ENCODE measurements at regions of chr17 and their contacts with region 1.

Region 1: GRCh38 chr17:7561028-7561575 is 617 bp upstream of the SENP3 start:
- H3K4me3 ChIP-seq: peak overlapping the region; percentile 85
- H3K27ac ChIP-seq: peak overlapping the region; percentile 93
- H3K4me1 ChIP-seq: peaks cover 11% of the 10 kb centered on the region
- CTCF ChIP-seq: peak; percentile 90

Region 2: DNA sequence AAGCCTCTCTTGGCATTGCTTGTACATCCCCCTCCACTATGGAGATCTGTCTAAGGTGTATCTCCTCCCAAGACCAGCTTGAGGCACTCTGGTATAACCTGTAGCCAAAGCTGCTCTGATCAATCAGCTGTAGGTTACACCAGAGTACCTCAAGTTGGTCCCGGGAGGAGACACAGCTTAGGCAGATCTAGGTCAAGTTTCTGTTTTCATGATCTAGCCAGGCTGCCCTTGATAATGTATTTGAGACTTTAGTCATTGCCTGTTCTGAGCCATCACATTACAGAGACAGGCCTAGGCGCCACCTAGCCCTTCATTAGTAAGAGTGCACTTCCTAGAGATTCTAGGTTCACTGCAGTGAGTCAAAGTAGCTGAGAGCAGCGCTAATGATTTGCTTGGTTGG is 413.3 kb before region 1 on chr17:
- CTCF ChIA-PET with region 1: no interaction called
- POLR2A ChIA-PET with region 1: no interaction called
- H3K4me3 ChIP-seq: no peak overlapping the region
- H3K27ac ChIP-seq: no peak overlapping the region
- H3K4me1 ChIP-seq: no peaks in the 10 kb centered on the region; the same call in 1 of the 2 replicates
- CTCF ChIP-seq: no peak

Region 3: DNA sequence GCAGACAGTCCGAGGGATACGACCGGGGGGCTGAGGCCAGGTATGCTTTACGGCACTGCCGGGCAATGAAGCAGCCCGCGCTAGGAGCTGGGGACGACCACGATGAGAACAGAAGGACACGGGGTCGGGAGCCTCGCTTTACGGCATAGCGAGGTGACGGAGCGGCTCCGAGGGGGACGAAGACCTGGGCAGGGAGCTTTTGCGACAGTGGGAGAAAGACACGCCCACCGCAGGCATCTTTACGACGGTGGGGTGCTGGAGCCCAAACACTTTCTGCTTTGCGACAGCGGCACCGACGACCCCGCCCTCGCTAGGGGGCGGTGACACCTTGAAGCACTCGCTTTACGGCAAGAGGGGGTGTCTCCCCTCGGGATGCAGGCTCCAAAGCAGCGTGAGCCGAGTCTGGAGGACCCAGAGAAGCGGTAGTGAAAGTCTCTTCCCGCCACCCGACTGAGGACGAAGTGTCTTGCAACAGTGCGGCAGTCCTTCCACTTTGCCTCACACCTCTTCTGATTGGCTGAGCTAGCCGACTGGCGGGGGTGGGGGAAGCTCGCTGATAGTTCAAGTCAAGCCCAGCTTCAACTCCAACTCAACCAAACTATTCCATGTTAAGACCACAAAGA is 231.6 kb before region 1 on chr17:
- CTCF ChIA-PET with region 1: interaction called, 11 read pairs
- POLR2A ChIA-PET with region 1: interaction called, 12 read pairs
- H3K4me3 ChIP-seq: peak overlapping the region; percentile 64
- H3K27ac ChIP-seq: peak overlapping the region; percentile 86
- H3K4me1 ChIP-seq: peaks cover 9% of the 10 kb centered on the region
- CTCF ChIP-seq: no peak

Region 4: GRCh38 chr17:7403977-7404736 is 156.9 kb before region 1 on chr17 and contains the start of gene TMEM256:
- CTCF ChIA-PET with region 1: interaction called, 3 read pairs
- POLR2A ChIA-PET with region 1: interaction called, 13 read pairs
- H3K4me3 ChIP-seq: peak within 1 kb of the TSS; percentile 83
- H3K27ac ChIP-seq: peak within 1 kb of the TSS; percentile 81
- H3K4me1 ChIP-seq: peaks cover 8% of the 10 kb centered on the region
- CTCF ChIP-seq: no peak

Region 5: DNA sequence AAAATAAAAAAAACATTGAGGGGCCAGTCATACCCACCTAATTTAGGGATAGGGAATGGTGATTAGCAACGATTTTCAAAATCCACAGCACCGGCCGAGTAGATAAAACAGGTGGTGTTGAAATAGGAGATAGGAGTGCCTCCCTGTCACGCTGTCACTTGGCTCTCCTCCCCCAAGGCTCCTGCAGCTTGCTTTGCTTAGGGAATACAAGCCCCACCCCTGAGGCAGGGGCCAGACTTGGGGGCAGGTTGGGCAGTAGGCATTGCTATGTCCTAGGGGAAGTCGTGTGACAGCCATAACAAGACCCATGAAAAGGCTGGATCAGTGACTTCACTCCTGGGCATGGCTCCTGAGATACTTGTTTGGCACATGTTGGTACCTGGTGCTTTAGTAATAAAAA is 51.2 kb before region 1 on chr17:
- CTCF ChIA-PET with region 1: interaction called, 112 read pairs
- POLR2A ChIA-PET with region 1: interaction called, 7 read pairs
- H3K4me3 ChIP-seq: no peak overlapping the region
- H3K27ac ChIP-seq: no peak overlapping the region
- H3K4me1 ChIP-seq: no peaks in the 10 kb centered on the region
- CTCF ChIP-seq: no peak

Region 6: GRCh38 chr17:7538891-7539290 is 22.2 kb before region 1 on chr17:
- CTCF ChIA-PET with region 1: interaction called, 18 read pairs
- POLR2A ChIA-PET with region 1: interaction called, 3 read pairs
- H3K4me3 ChIP-seq: no peak overlapping the region
- H3K27ac ChIP-seq: no peak overlapping the region
- H3K4me1 ChIP-seq: no peaks in the 10 kb centered on the region
- CTCF ChIP-seq: no peak

Region 7: GRCh38 chr17:7703584-7704479 is 142.7 kb after region 1 on chr17:
- CTCF ChIA-PET with region 1: interaction called, 11 read pairs
- POLR2A ChIA-PET with region 1: interaction called, 3 read pairs
- H3K4me3 ChIP-seq: no peak overlapping the region
- H3K27ac ChIP-seq: no peak overlapping the region
- H3K4me1 ChIP-seq: peaks cover 14% of the 10 kb centered on the region; the same call in 1 of the 2 replicates
- CTCF ChIP-seq: no peak

Measured in HEK293 (cell line).